Activated CD8-positive, alpha-beta T cell treated with anti-CD3 and anti-CD28 coated beads for 36 hours (primary cell): ENCODE measurements at regions of chr18 and their contacts with region 1.

Region 1: DNA sequence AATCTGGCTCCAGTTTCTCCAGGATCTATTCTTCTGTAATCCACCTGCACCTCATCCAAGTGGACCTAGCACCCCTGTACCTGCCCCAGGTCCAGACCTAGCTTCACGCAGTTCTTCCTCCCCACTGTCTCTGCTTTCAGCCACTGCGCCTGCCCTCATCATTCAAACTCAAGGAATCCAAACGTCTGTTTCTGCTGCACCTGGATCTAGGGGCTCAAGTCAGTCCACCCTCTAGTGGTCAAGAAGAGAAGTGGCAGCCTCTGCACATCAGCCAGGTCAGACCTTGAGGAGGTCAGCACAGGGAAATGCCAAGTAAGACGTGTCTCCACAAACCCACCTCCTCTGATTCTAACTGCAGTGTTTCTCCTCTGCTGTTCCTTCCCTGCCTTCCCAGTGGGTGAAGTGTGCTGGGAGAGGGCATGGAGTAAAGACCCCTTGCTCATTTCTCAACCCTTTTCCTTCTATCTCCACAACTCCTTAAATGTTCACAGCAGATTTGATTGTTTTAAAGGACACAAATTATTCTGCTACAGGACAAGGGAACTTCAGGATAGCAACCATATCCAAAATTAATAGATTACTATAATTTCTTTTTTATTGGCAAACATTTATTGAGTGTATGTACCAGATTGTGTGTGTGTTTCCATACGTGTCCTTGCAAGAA is 8.6 kb upstream of the RNF152 start:
- DNase-seq: peak; percentile 44
- ATAC-seq: peak; percentile 94
- H3K4me3 Mint-ChIP-seq: no peak overlapping the region
- H3K27ac Mint-ChIP-seq: no peak overlapping the region
- H3K4me1 Mint-ChIP-seq: no peaks in the 10 kb centered on the region
- H3K27me3 Mint-ChIP-seq: peaks cover 28% of the 10 kb centered on the region
- CTCF ChIP-seq: peak; percentile 74

Region 2: DNA sequence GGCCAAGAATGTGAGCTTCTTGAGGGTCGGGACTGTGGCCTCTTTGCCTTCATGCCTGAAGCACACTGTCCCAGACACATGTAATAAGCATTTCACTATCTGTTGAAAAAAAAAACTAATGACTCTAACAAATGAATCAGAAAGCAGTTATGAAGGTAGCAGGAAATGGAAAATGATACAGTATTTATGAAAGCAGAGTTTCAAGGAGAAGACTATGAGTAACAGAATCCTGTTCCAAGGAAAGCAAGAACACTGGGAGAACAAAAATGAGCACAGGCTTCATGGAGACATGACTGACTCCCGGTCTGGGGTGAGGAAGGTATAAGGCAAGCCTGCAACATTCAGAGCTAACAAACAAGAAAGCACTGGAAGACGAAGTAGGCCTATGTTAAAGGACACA is 199.4 kb before region 1 on chr18:
- CTCF ChIA-PET with region 1: no interaction called
- POLR2A ChIA-PET with region 1: no interaction called
- intact Hi-C with region 1: no loop called
- DNase-seq: no peak
- ATAC-seq: no peak
- H3K4me3 Mint-ChIP-seq: no peak overlapping the region
- H3K27ac Mint-ChIP-seq: no peak overlapping the region
- H3K4me1 Mint-ChIP-seq: no peaks in the 10 kb centered on the region
- H3K27me3 Mint-ChIP-seq: peaks cover 9% of the 10 kb centered on the region
- CTCF ChIP-seq: no peak

Region 3: GRCh38 chr18:61912466-61912865 is 11.0 kb after region 1 on chr18:
- CTCF ChIA-PET with region 1: interaction called, 11 read pairs
- POLR2A ChIA-PET with region 1: no interaction called
- intact Hi-C with region 1: no loop called
- DNase-seq: no peak
- ATAC-seq: no peak
- H3K4me3 Mint-ChIP-seq: no peak overlapping the region
- H3K27ac Mint-ChIP-seq: no peak overlapping the region
- H3K4me1 Mint-ChIP-seq: peaks cover 4% of the 10 kb centered on the region
- H3K27me3 Mint-ChIP-seq: peaks cover 4% of the 10 kb centered on the region
- CTCF ChIP-seq: no peak

Region 4: DNA sequence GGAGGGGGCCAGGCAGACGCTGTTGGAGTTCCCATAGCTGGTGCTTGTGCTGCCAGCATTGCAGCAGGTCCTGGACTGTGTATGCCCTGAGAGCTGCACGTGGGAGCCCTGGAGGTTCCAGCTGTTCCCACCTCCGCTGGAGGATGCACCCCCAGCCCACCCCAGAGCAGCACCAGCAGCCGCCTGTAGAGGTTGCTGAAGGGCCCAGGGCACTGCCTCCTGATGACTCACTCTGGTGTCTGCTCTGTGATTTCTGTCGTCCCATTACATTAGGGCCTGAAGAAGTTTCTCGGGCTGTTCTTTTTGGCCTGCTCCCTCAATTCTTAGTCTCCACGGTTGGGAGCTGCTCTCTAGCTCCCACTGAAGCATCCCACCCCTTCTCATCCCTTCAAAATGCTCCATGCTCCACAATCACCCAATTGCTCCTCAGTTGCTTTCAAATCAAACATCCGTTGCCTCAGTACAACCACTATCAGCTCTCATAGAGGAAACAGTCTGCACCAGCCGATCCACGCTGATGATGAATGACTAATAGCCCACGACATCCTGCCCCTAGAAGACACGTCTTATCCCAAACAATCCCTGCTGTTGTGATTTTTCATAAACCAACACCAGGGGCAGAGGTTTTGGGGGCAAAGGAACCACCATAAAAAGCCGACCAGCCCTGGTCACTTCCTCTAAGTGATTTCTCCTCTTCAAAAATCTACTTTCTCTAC is 56.5 kb after region 1 on chr18:
- CTCF ChIA-PET with region 1: no interaction called
- POLR2A ChIA-PET with region 1: no interaction called
- intact Hi-C with region 1: no loop called
- DNase-seq: no peak
- ATAC-seq: peak; percentile 39
- H3K4me3 Mint-ChIP-seq: no peak overlapping the region
- H3K27ac Mint-ChIP-seq: no peak overlapping the region
- H3K4me1 Mint-ChIP-seq: no peaks in the 10 kb centered on the region
- H3K27me3 Mint-ChIP-seq: peaks cover 16% of the 10 kb centered on the region
- CTCF ChIP-seq: no peak